Activated CD8-positive, alpha-beta T cell treated with anti-CD3 and anti-CD28 coated beads for 36 hours (primary cell): ENCODE measurements at regions of chr13 and their contacts with region 1.

Region 1: DNA sequence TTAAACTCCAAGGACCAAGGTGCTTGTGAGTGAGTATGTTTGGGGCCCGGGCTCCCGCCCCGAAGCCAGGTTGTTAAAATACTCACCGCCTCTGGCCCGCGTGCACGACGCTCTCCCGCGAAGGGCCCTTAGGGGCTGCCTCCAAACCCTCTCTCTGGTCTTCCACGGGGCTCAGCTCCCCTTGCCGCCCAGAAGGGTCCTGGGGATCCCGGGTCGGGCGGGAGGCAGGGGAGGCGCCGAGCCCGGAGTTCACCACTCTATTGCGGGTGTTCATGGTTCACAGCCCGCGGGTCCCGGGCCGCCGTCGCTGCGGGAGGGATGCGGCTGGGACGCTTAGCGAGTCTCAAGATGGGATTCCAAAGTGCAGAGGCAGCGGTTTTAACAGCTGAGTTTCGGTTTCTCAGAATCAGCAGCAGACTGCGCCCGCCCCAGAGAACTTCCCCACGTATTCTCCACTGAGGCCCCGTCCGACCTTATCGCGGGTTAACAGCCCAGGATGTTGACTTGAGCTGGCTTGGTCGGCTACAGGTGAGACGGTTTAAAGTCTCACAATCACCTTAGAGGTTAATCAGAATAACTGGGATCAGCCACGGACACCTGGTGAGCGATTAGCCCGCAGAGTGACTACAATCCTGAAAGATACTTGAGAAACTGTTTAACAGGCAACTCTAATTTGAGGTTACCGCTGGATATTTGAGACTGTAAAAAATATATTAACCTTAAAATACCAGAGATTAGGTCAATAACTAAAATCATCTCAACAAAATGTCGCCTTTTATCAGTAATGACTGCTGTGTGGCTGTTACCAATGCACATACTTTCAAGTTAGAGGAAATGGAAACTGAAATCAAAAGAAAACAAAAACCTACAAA is at the start of gene EPSTI1:
- DNase-seq: peak; percentile 84
- ATAC-seq: peak; percentile 82
- H3K4me3 Mint-ChIP-seq: peak within 1 kb of the TSS; percentile 84
- H3K27ac Mint-ChIP-seq: peak within 1 kb of the TSS; percentile 97
- H3K4me1 Mint-ChIP-seq: peaks cover 43% of the 10 kb centered on the region
- H3K27me3 Mint-ChIP-seq: no peaks in the 10 kb centered on the region
- CTCF ChIP-seq: no peak
- total RNA-seq, gene EPSTI1: 8.4 to 9.7 TPM

Region 2: GRCh38 chr13:42794577-42795275 is 197.4 kb before region 1 on chr13:
- CTCF ChIA-PET with region 1: no interaction called
- POLR2A ChIA-PET with region 1: no interaction called
- intact Hi-C with region 1: no loop called
- DNase-seq: no peak
- ATAC-seq: no peak
- H3K4me3 Mint-ChIP-seq: no peak overlapping the region
- H3K27ac Mint-ChIP-seq: no peak overlapping the region
- H3K4me1 Mint-ChIP-seq: no peaks in the 10 kb centered on the region
- H3K27me3 Mint-ChIP-seq: peaks cover 14% of the 10 kb centered on the region
- CTCF ChIP-seq: no peak

Region 3: DNA sequence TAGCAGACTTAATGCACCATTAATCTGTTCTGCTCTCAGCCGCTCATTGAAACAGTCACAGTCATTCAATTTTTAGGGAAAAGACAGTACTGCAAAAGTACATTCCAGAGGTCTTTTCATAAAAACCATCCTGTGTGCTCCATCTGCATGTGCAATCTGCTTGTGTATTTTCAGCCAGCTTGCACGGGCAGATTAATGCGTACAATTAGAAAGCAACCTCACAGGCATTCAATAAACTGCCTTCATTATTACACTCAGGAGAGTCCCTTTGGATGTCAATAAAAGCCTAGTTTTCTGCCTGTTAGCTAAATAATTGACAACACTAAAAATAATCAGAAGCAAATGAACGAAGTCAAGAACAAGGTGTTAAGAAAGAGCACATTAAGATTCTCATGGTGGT is 41.9 kb before region 1 on chr13:
- CTCF ChIA-PET with region 1: no interaction called
- POLR2A ChIA-PET with region 1: no interaction called
- intact Hi-C with region 1: no loop called
- DNase-seq: no peak
- ATAC-seq: no peak
- H3K4me3 Mint-ChIP-seq: no peak overlapping the region
- H3K27ac Mint-ChIP-seq: no peak overlapping the region
- H3K4me1 Mint-ChIP-seq: no peaks in the 10 kb centered on the region
- H3K27me3 Mint-ChIP-seq: no peaks in the 10 kb centered on the region
- CTCF ChIP-seq: no peak

Region 4: DNA sequence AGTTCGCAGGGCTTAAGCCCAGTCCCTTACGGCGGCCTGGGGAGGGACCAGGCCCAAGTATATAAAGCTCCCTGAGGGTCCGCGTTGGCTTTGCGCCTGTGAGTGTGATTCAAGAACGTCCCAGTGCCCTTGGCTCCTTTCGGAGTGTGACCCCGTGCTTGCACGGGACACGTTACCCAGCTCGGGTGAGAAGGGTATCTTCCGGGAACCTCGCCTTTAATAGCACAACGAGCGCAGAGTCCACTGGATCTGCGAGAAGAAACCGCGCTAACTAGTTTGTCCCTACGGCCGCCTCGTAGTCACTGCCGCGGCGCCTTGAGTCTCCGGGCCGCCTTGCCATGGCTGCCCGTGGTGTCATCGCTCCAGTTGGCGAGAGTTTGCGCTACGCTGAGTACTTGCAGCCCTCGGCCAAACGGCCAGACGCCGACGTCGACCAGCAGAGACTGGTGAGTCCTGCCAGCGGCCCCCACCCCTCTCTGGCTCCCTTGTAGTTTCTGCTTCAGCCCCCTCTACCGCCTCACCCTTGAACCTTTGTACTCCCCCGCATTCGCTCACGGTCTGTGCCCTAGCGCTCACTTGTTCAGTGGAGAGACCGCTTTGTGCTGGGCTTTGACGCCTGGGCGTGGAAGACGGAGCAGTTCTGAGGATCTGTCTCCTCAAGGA is 31.3 kb after region 1 on chr13 and contains the start of gene DNAJC15:
- CTCF ChIA-PET with region 1: interaction called, 3 read pairs
- POLR2A ChIA-PET with region 1: interaction called, 20 read pairs
- intact Hi-C with region 1: no loop called
- DNase-seq: peak; percentile 86
- ATAC-seq: peak; percentile 93
- H3K4me3 Mint-ChIP-seq: peak within 1 kb of the TSS; percentile 97
- H3K27ac Mint-ChIP-seq: peak within 1 kb of the TSS; percentile 94
- H3K4me1 Mint-ChIP-seq: peaks cover 27% of the 10 kb centered on the region
- H3K27me3 Mint-ChIP-seq: no peaks in the 10 kb centered on the region
- CTCF ChIP-seq: no peak
- total RNA-seq, gene DNAJC15: 8.9 to 10.6 TPM

Region 5: GRCh38 chr13:43058336-43058710 is 66.2 kb after region 1 on chr13:
- CTCF ChIA-PET with region 1: interaction called, 3 read pairs
- POLR2A ChIA-PET with region 1: interaction called, 11 read pairs
- intact Hi-C with region 1: no loop called
- DNase-seq: peak; percentile 45
- ATAC-seq: peak; percentile 48
- H3K4me3 Mint-ChIP-seq: no peak overlapping the region
- H3K27ac Mint-ChIP-seq: peak overlapping the region; percentile 79
- H3K4me1 Mint-ChIP-seq: peaks cover 54% of the 10 kb centered on the region
- H3K27me3 Mint-ChIP-seq: no peaks in the 10 kb centered on the region
- CTCF ChIP-seq: no peak

Region 6: GRCh38 chr13:43448605-43449336 is 456.6 kb after region 1 on chr13:
- CTCF ChIA-PET with region 1: no interaction called
- POLR2A ChIA-PET with region 1: no interaction called
- intact Hi-C with region 1: no loop called
- DNase-seq: no peak
- ATAC-seq: no peak
- H3K4me3 Mint-ChIP-seq: no peak overlapping the region
- H3K27ac Mint-ChIP-seq: no peak overlapping the region
- H3K4me1 Mint-ChIP-seq: no peaks in the 10 kb centered on the region
- H3K27me3 Mint-ChIP-seq: peaks cover 8% of the 10 kb centered on the region
- CTCF ChIP-seq: no peak